Left lung (tissue), 14 donors: ENCODE measurements at regions of chr4 and their contacts with region 1.

Region 1: DNA sequence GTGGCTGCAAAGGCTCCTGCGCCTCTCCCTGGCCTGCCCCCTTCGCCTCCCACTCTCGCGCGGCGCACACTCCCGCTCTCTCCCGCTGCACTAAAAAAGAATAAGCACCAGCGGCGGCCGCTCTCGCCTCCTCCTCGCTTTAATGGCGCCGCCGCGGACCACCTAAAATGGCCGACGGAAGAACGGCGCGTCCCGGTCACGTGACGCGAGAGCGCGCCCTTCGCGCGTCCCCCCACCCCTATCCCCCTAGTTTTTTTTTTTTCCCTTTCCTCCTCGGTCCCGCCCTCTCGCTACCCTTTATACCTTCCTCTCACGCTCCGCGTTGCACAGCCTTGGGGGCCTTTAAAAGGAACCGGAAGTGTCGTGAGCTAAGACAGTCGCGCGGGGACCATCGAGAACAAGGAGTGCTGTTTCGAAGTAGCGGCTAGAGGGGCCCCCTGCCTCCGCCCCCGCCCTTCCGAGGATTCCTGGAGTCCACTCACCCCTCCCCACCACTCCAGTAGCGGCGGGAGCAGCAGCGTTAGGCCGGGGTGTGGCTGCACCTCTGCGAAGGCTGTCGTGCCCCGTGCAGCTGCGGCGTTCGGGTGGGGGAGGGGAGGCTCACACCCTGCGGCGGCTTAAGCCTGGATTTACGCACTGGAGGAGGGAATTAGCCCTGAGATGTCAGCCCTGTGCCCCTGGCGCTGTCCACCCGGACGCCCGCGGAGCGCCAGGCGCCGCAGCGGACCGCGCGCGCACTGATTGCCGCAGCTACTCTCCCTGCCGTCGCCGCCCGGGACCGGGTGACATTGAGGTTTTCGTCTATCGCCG is at the start of gene HNRNPD:
- DNase-seq: peak; percentile 98 to 100 (median 98)
- ATAC-seq: peak; percentile 92
- H3K4me3 ChIP-seq: peak within 1 kb of the TSS; percentile 92 to 95
- H3K27ac ChIP-seq: peak within 1 kb of the TSS; percentile 96 to 99
- H3K4me1 ChIP-seq: peaks cover 21 to 50% of the 10 kb centered on the region in 2 donors
- H3K27me3 ChIP-seq: no peaks in the 10 kb centered on the region
- CTCF ChIP-seq: no peak
- polyA plus RNA-seq, gene HNRNPD: 504 to 614 (median 587) TPM

Region 2: GRCh38 chr4:82428969-82429727 is 55.1 kb after region 1 on chr4:
- intact Hi-C with region 1: loop called in 1 of 2 experiments (anchors 10 kb)
- DNase-seq: peak; percentile 93 to 97 (median 95)
- ATAC-seq: peak; percentile 85
- H3K4me3 ChIP-seq: peak overlapping the region; percentile 86 to 97
- H3K27ac ChIP-seq: peak overlapping the region; percentile 99
- H3K4me1 ChIP-seq: peaks cover 17 to 62% of the 10 kb centered on the region in 2 donors
- H3K27me3 ChIP-seq: no peaks in the 10 kb centered on the region
- CTCF ChIP-seq: peak; percentile 92 to 100